Endothelial cell of umbilical vein (primary cell): ENCODE measurements at regions of chr5 and their contacts with region 1.

Region 1: GRCh38 chr5:94693043-94693822 is 74.8 kb downstream of the SLF1 start:
- DNase-seq: peak; percentile 65
- H3K4me3 ChIP-seq: no peak overlapping the region
- H3K27ac ChIP-seq: peak overlapping the region; percentile 29
- H3K4me1 ChIP-seq: peaks cover 15% of the 10 kb centered on the region
- H3K27me3 ChIP-seq: no peaks in the 10 kb centered on the region
- CTCF ChIP-seq: peak; percentile 13 to 19
- POLR2A ChIP-seq: peak; percentile 30

Region 2: DNA sequence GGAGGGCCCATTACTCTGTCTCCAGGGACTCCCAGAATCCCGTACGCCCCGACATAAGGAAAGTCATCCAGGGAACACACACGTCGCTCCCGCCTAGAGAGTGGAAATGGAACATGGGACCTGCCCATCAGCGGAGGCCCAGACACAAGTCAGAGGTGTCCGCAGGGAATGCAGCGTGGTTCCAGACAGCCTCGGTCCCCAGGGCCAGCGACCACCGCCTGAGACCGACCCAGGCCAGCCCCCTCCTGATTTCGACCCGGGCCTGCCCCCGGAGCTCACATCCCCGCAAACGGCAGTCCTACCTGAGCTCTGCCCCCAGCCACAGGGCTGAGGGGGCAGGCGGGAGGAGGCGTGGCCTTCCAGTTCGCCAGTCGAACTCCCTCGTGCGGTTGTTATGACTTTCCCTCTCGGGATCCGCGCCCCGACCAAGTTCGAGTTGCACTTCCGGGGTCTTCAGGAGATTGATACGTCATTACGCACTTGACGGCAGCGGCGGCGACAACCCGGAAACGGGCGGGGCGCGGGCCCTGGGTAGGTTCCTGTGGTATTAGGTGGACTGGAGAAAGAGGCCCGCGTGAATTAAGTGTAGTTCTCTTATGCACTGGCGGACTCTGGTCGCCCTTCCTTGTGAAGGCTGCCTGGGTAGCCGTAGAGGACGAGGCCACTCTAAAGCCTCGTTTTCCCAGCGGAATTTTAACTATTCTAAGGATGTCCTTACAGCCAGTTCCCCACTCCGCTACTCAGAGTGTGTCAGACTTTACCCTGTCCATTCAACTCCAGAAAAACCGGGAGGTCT is 581.8 kb before region 1 on chr5:
- CTCF ChIA-PET with region 1: no interaction called
- POLR2A ChIA-PET with region 1: no interaction called
- dilution Hi-C with region 1: no loop called
- intact Hi-C with region 1: loop called (anchors 5 kb)
- DNase-seq: peak; percentile 93
- H3K4me3 ChIP-seq: peak overlapping the region; percentile 18 to 81 (median 61)
- H3K27ac ChIP-seq: peak overlapping the region; percentile 76
- H3K4me1 ChIP-seq: peaks cover 5% of the 10 kb centered on the region
- H3K27me3 ChIP-seq: peaks cover 3 to 4% of the 10 kb centered on the region in 2 experiments
- CTCF ChIP-seq: no peak
- POLR2A ChIP-seq: peak; percentile 76

Region 3: DNA sequence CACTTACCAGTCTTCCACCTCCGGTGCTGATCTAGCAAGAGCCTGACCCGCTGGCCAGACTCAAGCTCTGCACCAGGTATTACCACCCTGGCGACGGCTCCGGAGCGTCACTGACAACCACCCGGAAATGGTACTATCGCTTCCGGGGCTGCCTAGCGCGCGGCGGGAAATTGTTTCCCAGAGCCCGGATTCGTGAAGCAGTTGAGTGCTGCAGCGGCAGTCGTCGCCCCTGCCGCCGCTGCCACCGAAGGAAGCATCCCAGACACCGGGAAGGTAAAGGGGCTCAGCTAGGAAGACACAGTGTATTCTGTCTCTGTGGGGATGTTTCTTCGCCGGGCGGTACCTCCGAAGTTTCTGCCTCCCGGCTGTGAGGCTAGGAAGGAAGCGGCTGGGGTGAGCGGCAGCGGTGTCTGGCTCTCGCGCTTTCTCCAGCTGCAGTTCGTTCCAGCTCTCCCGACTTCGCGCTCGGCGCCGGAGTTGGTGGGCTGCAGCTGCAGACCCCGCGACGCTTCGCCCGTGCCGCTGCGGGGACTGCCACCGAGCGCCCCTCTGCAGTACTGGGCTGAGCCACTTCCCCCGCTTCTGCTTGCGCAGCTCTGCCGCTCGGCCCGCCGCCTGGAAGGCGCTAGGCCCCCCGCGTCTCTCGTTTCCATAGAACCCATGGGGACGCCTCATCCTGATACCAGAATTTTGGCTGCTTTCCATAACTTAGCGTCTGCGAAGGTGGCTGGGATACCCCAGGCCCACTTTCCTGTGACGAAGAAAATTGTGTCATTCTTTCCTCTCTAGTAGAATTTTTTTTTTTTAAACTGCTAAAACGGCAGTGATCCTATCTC is 74.5 kb before region 1 on chr5 and contains the starts of genes KIAA0825 and SLF1:
- CTCF ChIA-PET with region 1: interaction called, 5 read pairs
- POLR2A ChIA-PET with region 1: no interaction called
- dilution Hi-C with region 1: no loop called
- intact Hi-C with region 1: loop called (anchors 1 kb)
- DNase-seq: peak; percentile 91
- H3K4me3 ChIP-seq: peak within 1 kb of the TSS; percentile 73 to 90 (median 79)
- H3K27ac ChIP-seq: peak within 1 kb of the TSS; percentile 66
- H3K4me1 ChIP-seq: peaks cover 12% of the 10 kb centered on the region
- H3K27me3 ChIP-seq: no peaks in the 10 kb centered on the region
- CTCF ChIP-seq: no peak
- POLR2A ChIP-seq: peak; percentile 43
- total RNA-seq, gene KIAA0825: 1.1 and 1.3 TPM in 2 replicates
- total RNA-seq, gene SLF1: 6.4 and 8.5 TPM in 2 replicates